Panc1 (cell line): ENCODE measurements at regions of chr4 and their contacts with region 1.

Region 1: DNA sequence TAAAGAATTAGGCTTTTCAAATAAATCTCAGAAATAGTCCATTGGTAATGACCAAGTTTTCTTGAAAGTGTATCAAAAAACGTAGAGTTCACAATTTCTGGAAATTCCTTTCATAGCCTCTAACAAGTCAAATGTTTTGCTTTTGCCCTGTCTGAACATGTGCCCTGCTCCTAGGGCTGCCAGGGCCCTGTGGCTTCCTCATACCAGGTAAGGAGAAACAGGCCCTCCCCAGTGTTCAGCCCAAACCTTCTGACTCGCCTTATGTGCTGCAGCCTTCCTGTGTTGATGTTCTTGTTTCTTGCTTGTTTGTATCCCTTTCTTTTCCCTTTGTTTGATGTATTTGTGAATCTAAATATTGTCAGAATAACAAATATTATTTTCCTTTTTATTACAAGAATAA is 146.1 kb upstream of the PACRGL start:
- DNase-seq: no peak
- ATAC-seq: no peak
- H3K4me3 ChIP-seq: no peak overlapping the region
- H3K27ac ChIP-seq: no peak overlapping the region
- H3K4me1 ChIP-seq: no peaks in the 10 kb centered on the region
- H3K27me3 ChIP-seq: no peaks in the 10 kb centered on the region
- CTCF ChIP-seq: no peak

Region 2: GRCh38 chr4:20684852-20685763 is 131.0 kb after region 1 on chr4:
- CTCF ChIA-PET with region 1: no interaction called
- POLR2A ChIA-PET with region 1: no interaction called
- in situ Hi-C with region 1: no loop called
- intact Hi-C with region 1: loop called (anchors 10 kb)
- DNase-seq: no peak
- ATAC-seq: no peak
- H3K4me3 ChIP-seq: no peak overlapping the region
- H3K27ac ChIP-seq: no peak overlapping the region
- H3K4me1 ChIP-seq: no peaks in the 10 kb centered on the region
- H3K27me3 ChIP-seq: no peaks in the 10 kb centered on the region
- CTCF ChIP-seq: peak; percentile 58; the same call in 1 of the 2 replicates